ENCODE measurements at regions of chr20 and their contacts with region 1.

Region 1: GRCh38 chr20:41509316-41510200 is 108.6 kb downstream of the CHD6 start:
- DNase-seq: peak; percentile 90
- H3K4me3 ChIP-seq: no peak overlapping the region
- H3K27ac ChIP-seq: peak overlapping the region; percentile 50 to 76 (median 64)
- H3K4me1 ChIP-seq: peaks cover 0 to 67% (median 55%) of the 10 kb centered on the region in 4 donors
- H3K27me3 ChIP-seq: no peaks in the 10 kb centered on the region
- CTCF ChIP-seq: no peak
- EP300 ChIP-seq: no peak
- POLR2A ChIP-seq: no peak

Region 2: DNA sequence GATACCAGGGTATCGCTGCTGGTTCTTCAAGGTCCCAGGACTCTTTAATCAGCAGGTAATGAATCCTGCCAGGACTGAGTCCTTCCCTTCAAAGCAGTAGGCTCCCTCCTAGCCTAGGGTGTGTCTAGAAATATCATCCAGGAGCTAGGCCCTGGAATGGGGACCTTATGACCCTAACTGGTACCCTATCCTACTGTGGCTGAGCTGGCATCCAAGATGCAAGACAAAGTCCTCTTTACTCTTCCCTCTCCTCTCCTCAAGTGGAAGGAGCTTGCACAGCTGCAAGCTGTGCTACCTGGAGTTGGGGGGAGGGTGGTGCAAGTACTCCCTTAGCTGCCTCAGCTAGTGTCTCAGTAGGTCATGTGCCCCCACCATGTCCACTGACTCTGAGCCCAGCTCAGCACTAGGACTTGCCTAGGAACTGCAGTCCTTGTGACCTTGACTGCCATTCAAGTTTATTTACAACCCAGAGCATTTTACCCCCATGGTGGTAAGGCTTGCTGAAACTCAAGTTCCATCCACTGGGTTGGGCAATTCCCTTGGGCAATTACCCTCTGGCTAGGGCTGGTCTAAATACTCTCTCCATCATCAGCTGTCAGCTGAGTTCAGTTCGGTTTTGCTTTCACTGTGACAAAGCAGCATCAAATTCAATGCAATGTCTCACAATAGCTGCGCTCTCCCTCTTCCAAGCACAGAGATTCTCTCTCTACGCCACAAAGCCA is 529.3 kb before region 1 on chr20:
- intact Hi-C with region 1: no loop called
- DNase-seq: peak; percentile 11
- H3K4me3 ChIP-seq: no peak overlapping the region
- H3K27ac ChIP-seq: no peak overlapping the region
- H3K4me1 ChIP-seq: no peaks in the 10 kb centered on the region
- H3K27me3 ChIP-seq: no peaks in the 10 kb centered on the region
- CTCF ChIP-seq: no peak
- EP300 ChIP-seq: no peak
- POLR2A ChIP-seq: no peak

Region 3: GRCh38 chr20:41617931-41618806 is 108.6 kb after region 1 on chr20 and contains the start of gene CHD6:
- intact Hi-C with region 1: loop called (anchors 2 kb)
- DNase-seq: peak; percentile 100
- H3K4me3 ChIP-seq: peak within 1 kb of the TSS; percentile 69 to 95 (median 80)
- H3K27ac ChIP-seq: peak within 1 kb of the TSS; percentile 85 to 96 (median 86)
- H3K4me1 ChIP-seq: peaks cover 0 to 39% (median 31%) of the 10 kb centered on the region in 4 donors
- H3K27me3 ChIP-seq: no peaks in the 10 kb centered on the region
- CTCF ChIP-seq: no peak
- EP300 ChIP-seq: no peak
- POLR2A ChIP-seq: no peak
- total RNA-seq, gene CHD6: 29.9 to 40.2 (median 33.1) TPM